ENCODE measurements at regions of chr21 and their contacts with region 1.

Region 1: DNA sequence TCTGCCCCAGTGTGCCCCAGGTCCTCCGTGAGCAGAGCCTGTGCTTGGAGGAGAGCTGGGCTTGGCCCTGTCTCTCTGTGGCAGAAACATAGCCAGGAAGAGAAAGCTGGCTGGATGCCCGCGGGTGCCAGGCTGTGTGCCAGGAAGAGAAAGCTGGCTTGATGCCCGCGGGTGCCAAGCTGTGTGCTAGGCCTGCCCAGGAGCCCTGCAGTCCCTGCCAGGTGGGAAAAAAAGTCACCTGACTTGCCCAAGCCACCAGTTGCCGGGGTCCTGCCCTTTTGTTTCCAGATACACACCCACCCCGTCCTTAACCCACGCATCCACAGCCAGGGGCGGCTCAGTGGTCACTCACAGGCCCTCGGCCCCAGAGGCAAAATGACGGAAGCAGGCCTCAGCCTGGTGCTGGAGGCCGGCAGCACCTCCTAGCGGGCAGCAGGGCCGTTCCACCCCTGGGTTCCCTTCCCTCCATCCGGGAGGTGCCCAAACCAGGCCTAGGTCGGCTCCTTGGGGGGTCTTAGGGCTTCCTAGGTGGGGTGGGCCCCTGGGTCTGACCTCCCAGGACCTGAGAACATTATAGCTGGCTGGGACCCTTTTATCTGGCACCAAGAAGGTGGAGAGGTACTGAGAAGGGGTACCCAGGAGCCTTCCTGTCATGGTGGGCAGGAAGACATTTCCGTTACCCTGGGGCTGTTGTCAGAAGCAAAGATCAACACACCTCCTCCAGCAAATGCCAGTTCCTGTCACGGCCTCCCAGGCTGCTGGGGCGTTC is 9.1 kb downstream of the ITGB2 start:
- DNase-seq: no peak
- H3K27ac ChIP-seq: peak overlapping the region; percentile 77
- CTCF ChIP-seq: peak; percentile 53

Region 2: DNA sequence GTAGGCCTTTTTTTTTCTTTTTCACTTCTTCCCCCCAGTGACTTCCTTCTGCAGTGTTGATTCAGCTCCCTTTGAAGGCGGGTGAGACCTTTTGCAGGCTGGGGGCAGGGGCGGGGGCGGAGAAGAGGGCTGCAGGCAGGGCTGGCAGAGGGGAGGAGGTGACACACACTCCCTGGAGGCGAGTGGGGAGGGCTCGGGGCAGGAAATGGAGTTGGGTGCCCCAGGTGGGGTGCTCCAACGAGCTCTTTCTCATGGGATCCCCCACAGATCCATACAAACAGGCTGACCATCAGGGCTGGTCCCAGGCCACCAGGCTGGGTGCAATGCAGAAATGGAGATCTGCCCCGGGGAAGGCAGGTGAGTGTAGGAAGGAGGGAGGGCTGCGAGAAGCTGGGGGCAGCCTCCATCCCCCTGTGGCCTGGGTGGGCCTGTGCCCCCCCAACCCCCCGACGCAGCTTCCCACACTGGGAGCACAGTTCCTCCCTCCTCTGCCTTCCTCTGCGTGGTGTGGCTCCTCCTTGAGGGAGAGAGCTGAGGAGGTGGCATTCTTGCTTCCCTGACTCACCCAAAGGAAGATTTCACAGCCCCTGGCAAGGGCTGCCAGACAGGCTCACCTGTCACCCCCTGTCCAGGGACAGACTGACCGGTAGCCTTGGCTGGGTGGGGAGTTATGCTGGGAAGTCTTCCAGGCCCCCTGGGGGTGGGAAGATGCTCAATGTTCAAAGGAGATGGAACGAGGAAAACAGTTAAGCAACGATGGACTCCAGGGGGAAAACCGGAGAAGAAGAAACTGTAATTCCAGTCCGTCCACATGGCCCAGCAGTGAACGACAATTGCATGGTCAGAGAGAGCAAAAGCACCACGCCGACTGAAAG is 16.3 kb after region 1 on chr21:
- CTCF ChIA-PET with region 1: interaction called, 10 read pairs
- POLR2A ChIA-PET with region 1: no interaction called
- DNase-seq: peak; percentile 84
- H3K27ac ChIP-seq: peak overlapping the region; percentile 66
- CTCF ChIP-seq: no peak

Region 3: DNA sequence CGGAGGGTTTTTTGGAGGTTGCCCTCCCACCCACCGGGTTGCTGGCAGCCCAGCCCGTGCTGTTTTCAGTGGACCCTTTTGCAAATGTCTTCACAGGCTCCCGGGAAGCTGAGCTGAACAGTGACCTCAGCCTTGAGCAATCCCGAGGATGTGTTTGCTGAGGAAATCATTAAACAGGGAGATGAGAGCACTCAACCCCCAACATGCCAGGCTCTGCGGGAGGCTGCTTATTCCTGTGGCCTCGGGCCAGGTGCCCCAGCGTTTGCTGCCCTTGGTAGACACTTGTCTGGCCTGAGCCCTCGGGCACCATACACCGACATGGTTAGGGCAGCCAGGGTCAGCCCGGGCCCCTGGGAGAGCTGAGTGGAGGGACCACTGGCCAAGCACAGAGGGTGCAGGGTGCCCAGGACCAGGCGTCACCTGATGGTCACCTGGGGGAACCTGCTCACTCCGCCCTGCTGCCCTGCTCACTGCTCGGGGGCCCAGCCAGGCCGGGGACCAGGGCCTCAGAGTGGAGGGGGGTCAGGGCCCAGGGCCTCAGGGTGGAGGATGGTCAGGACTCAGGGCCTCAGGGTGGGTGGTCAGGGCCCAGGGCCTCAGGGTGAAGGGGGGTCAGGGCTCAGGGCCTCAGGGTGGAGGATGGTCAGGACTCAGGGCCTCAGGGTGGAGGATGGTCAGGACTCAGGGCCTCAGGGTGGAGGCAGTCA is 418.7 kb after region 1 on chr21:
- CTCF ChIA-PET with region 1: no interaction called
- POLR2A ChIA-PET with region 1: no interaction called
- DNase-seq: peak; percentile 53
- H3K27ac ChIP-seq: peak overlapping the region; percentile 88
- CTCF ChIP-seq: no peak

Measured in RWPE1 (cell line).